Activated CD4-positive, alpha-beta T cell treated with anti-CD3 and anti-CD28 coated beads, Interleukin-2, amount 10 ng/mL, durations not matched to agents 24 days and 14 days (primary cell): ENCODE measurements at regions of chr1 and their contacts with region 1.

Region 1: DNA sequence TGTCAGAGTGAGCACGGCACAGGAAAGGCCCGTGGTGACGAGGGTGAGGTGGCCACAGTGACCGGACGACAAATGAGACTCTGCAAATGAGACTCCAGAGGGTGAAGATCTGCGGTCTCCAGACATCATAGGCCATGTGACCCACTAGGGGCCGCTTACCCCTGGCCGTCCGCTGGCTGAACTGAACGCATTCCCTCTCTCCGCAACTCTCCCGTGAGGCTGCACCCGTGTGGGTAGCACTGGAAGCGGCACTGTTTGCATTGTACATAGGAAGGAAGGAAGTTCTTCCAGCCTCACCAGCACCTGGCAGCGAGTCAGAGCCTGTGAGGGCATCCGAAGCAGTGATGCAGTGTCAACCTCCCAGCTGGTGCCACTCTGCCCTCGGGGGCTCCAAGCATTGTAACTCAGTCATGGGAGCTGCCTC is 23.6 kb upstream of the SPSB1 start:
- DNase-seq: no peak
- H3K4me3 Mint-ChIP-seq: no peak overlapping the region
- H3K27ac Mint-ChIP-seq: no peak overlapping the region
- H3K4me1 Mint-ChIP-seq: peaks cover 10% of the 10 kb centered on the region
- H3K27me3 Mint-ChIP-seq: no peaks in the 10 kb centered on the region

Region 2: GRCh38 chr1:9441451-9442133 is 172.5 kb after region 1 on chr1:
- intact Hi-C with region 1: loop called (anchors 5 kb)
- DNase-seq: no peak
- H3K4me3 Mint-ChIP-seq: no peak overlapping the region
- H3K27ac Mint-ChIP-seq: no peak overlapping the region
- H3K4me1 Mint-ChIP-seq: no peaks in the 10 kb centered on the region
- H3K27me3 Mint-ChIP-seq: peaks cover 35% of the 10 kb centered on the region

Region 3: GRCh38 chr1:9455487-9456234 is 186.6 kb after region 1 on chr1:
- intact Hi-C with region 1: loop called (anchors 1 kb)
- DNase-seq: peak; percentile 89
- H3K4me3 Mint-ChIP-seq: no peak overlapping the region
- H3K27ac Mint-ChIP-seq: no peak overlapping the region
- H3K4me1 Mint-ChIP-seq: no peaks in the 10 kb centered on the region
- H3K27me3 Mint-ChIP-seq: peaks cover 16% of the 10 kb centered on the region